ENCODE measurements at regions of chr12 and their contacts with region 1.

Region 1: DNA sequence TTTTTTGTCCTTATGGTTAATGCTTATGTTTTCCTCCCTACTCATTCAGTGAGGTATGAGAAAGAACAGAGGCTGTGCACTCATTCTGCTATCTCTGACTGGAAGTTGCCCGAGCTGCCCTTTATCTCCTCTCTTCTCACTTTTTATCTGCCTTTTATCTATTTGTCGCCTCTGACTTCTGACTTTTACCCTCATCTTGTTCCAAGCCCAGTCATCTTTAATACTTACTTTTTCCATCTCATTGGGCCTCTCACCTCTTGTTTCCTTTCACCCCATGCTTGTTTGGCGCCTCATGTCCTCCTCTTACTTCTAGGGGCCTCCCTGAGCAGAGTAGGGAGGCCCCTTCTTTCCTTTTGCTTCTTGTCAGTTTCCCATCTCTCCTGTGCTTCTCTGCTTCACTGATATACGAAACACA is 50.7 kb downstream of the DIP2B start:
- DNase-seq: no peak
- H3K4me3 ChIP-seq: no peak overlapping the region
- H3K27ac ChIP-seq: peak overlapping the region; percentile 77
- H3K4me1 ChIP-seq: peaks cover 39% of the 10 kb centered on the region
- H3K27me3 ChIP-seq: no peaks in the 10 kb centered on the region
- CTCF ChIP-seq: no peak

Region 2: GRCh38 chr12:50611021-50611744 is 55.7 kb after region 1 on chr12:
- CTCF ChIA-PET with region 1: no interaction called
- POLR2A ChIA-PET with region 1: interaction called, 12 read pairs
- intact Hi-C with region 1: no loop called
- DNase-seq: no peak
- H3K4me3 ChIP-seq: no peak overlapping the region
- H3K27ac ChIP-seq: no peak overlapping the region
- H3K4me1 ChIP-seq: peaks cover 37% of the 10 kb centered on the region
- H3K27me3 ChIP-seq: no peaks in the 10 kb centered on the region
- CTCF ChIP-seq: no peak